ENCODE measurements at regions of chr6 and their contacts with region 1.

Region 1: DNA sequence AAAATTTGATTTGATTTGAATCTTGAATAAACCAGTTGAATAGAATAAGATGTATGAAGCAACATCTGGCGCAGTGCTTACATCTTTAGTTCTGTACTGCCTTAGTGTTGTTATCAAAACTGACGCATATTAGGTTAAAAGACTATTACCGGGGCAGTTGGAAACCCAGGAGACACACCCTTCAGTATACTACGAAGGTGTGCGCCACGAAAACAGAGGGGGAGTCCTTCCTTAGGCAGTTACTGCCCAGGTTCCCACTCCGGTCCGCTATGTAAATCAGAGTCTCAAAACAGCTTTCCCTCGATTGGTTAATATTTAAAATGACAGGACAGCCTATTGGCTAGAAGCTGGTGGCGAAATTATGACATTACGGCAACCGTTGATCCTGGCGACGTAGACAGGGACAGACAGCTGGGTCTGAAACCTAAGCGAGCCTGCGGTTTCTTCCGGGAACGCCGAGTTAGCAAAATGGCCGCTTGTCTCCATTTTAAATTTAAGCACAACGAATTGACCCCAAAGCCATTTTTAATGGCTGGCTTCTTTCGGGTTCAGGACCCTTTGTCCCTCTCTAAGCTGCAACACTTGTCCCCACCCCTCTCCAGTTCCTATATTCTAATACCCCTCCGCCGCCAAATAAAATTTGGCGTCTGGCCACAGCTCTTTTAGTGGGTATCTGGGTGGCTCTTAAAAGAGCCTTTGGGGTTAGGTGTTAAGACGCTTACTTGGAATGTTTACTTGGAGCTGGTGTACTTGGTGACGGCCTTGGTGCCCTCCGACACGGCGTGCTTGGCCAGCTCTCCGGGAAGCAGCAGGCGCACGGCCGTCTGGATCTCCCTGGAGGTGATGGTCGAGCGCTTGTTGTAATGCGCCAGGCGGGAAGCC is 35.8 kb downstream of the HFE start:
- DNase-seq: peak; percentile 80 to 99
- ATAC-seq: peak; percentile 87 to 93 (median 90)
- H3K4me3 ChIP-seq: peak overlapping the region; percentile 65 to 95 (median 83)
- H3K27ac ChIP-seq: peak overlapping the region; percentile 89 to 98 (median 96)
- H3K4me1 ChIP-seq: peaks cover 0 to 26% (median 21%) of the 10 kb centered on the region in 9 donors
- H3K27me3 ChIP-seq: no peaks in the 10 kb centered on the region
- CTCF ChIP-seq: no peak

Region 2: DNA sequence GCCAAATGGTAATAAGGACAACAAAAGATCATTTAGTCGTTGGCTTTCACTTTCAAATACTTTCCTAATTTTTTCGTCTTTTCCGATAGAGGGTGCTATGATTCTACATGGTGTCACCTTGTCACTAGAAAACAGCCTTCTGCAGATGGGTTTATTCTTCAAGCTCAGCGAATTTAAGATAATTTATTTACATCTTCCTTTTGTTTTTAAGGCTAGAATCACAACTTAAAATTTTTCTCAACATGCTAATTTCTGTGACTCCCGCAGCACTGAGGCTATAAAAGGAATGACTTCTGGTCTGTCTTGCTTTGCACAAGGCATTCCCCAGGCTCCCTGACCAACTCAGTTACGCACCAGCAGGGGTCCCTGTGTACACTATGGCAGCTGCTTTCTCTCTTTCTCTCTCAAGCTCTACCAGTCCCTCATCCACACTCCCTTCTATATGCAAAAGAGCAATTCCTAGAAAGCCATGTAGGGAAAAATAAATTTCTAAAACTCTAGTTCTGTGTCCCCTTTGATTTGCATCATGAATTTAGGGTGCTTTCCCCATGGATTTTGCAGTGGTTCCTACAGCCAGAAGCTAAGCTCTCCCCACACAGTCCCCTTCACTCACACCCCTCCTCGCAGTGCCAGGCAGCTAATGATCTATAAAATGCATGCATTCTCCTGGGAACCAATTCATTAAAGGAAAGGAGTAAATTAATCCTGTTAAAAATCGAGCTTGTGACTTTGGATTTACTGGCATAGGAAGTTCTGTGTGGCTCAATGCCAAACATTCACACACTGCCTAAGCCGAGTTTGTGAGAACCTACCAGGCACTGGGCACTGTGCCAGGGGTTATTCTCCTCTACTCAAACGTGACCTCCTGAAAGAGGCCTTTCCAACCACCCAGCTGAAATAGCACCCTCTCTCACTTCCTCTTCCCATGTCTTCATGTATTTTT is 1839.7 kb before region 1 on chr6:
- intact Hi-C with region 1: no loop called
- DNase-seq: peak; percentile 40 to 66
- ATAC-seq: peak; percentile 81 to 94 (median 87)
- H3K4me3 ChIP-seq: peak overlapping the region in 2 of 10 donors; percentile 3 to 18
- H3K27ac ChIP-seq: no peak overlapping the region
- H3K4me1 ChIP-seq: peaks cover 0 to 15% (median 7%) of the 10 kb centered on the region in 9 donors
- H3K27me3 ChIP-seq: peaks cover 0 to 26% (median 11%) of the 10 kb centered on the region in 7 donors
- CTCF ChIP-seq: peak in 8 of 9 donors; percentile 25 to 71 (median 48)

Region 3: DNA sequence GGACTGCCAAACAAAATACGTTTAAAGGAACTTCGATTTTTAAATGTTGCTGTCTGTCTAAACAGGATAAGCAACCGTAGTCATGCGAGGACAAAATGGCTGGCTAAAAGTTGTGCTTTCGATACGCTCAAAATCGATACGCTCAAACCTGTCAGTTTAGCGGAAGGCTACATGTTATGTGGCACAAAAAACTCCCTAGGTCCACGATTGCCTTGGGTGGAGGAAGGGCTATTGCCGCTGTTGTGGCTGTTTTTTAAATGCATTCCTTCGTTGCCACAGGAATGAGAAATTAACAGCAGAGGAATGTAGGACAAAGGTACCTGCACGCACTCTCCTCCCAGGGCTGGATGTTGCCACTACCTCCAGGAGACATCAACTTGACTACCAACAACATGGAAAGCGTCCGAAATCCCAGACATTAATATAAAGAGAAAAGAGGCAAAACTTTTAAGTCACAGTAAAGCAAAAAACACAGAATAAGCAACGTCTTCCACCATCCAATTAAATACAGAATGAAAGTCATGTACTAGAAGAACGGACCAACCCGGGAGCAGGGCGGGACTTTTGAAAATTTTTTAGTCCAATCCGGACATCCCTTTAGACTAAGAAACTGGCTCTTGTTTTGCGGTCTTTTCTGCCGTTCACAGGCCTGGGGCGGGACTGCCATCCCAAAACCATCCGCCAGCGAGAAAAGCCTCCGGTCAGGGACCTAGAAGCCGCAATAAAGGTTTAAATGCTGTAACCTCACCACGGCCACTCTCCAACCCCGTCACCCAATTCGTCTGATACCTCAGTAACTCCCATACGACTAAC is 68.0 kb before region 1 on chr6:
- intact Hi-C with region 1: loop called in 2 of 10 experiments (anchors 2 kb)
- DNase-seq: peak; percentile 66 to 95
- ATAC-seq: peak; percentile 83 to 91 (median 90)
- H3K4me3 ChIP-seq: peak overlapping the region; percentile 53 to 93 (median 76)
- H3K27ac ChIP-seq: peak overlapping the region; percentile 85 to 97 (median 94)
- H3K4me1 ChIP-seq: peaks cover 0 to 32% (median 16%) of the 10 kb centered on the region in 9 donors
- H3K27me3 ChIP-seq: no peaks in the 10 kb centered on the region
- CTCF ChIP-seq: peak in 3 of 9 donors; percentile 21 to 40 (median 23)

Region 4: DNA sequence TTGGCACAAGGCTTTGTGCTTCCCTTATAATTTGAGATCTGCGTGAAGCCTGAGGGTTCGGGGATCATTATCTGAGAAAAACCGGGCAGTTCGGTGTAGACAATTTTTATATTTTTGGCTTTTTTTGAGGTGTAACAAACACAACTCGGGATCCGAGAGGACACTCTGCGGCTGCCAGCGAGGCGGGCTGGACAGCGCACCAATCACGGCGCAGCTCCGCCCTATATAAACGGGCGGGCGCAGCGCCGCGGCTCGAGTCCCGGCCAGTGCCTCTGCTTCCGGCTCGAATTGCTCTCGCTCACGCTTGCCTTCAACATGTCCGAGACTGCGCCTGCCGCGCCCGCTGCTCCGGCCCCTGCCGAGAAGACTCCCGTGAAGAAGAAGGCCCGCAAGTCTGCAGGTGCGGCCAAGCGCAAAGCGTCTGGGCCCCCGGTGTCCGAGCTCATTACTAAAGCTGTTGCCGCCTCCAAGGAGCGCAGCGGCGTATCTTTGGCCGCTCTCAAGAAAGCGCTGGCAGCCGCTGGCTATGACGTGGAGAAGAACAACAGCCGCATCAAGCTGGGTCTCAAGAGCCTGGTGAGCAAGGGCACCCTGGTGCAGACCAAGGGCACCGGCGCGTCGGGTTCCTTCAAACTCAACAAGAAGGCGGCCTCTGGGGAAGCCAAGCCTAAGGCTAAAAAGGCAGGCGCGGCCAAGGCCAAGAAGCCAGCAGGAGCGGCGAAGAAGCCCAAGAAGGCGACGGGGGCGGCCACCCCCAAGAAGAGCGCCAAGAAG is 33.2 kb after region 1 on chr6:
- intact Hi-C with region 1: loop called in 8 of 10 experiments (anchors 1 to 2 kb)
- DNase-seq: peak; percentile 90
- ATAC-seq: peak; percentile 85 to 92 (median 88)
- H3K4me3 ChIP-seq: peak overlapping the region; percentile 52 to 97 (median 79)
- H3K27ac ChIP-seq: peak overlapping the region; percentile 81 to 98 (median 94)
- H3K4me1 ChIP-seq: peaks cover 4 to 31% (median 21%) of the 10 kb centered on the region in 9 donors
- H3K27me3 ChIP-seq: no peaks in the 10 kb centered on the region
- CTCF ChIP-seq: peak in 2 of 9 donors; percentile 8 to 15

Region 5: GRCh38 chr6:26196846-26197648 is 74.0 kb after region 1 on chr6:
- intact Hi-C with region 1: loop called in 4 of 10 experiments (anchors 2 to 10 kb)
- DNase-seq: peak; percentile 51 to 83
- ATAC-seq: peak; percentile 52 to 68 (median 62)
- H3K4me3 ChIP-seq: peak overlapping the region; percentile 37 to 75 (median 65)
- H3K27ac ChIP-seq: peak overlapping the region in 9 of 10 donors; percentile 57 to 90 (median 81)
- H3K4me1 ChIP-seq: peaks cover 0 to 52% (median 28%) of the 10 kb centered on the region in 9 donors
- H3K27me3 ChIP-seq: peaks cover 0 to 40% (median 0%) of the 10 kb centered on the region in 7 donors
- CTCF ChIP-seq: peak in 1 of 9 donors; percentile 0

Region 6: DNA sequence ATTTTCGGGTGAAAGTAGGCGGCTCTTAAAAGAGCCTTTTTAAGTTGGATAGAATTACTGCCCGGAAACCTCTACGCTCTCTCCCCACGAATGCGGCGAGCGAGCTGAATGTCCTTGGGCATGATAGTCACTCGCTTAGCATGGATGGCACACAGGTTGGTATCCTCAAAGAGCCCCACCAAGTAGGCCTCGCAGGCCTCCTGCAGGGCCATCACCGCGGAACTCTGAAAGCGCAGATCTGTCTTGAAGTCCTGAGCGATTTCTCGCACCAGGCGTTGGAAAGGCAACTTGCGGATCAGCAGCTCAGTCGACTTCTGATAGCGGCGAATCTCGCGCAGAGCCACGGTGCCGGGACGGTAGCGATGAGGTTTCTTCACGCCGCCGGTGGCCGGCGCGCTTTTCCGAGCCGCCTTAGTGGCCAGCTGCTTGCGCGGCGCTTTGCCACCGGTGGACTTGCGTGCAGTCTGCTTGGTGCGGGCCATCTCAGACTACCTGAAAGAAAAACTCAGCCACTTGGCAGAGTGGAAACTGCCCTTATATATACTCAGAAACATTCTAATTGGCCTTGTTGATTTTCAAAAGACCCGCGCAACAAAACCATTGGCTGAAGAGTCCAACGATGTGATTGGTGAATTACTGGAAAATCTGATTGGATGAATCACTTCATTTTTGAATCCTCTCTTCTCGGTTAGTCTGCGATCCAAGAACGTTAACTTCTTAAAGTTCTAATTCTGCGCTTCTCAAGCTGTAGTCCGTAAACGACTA is 148.1 kb after region 1 on chr6:
- intact Hi-C with region 1: loop called in 1 of 10 experiments (anchors 10 kb)
- DNase-seq: peak; percentile 29 to 82
- ATAC-seq: peak in 7 of 8 donors; percentile 46 to 66 (median 61)
- H3K4me3 ChIP-seq: peak overlapping the region in 9 of 10 donors; percentile 31 to 64 (median 49)
- H3K27ac ChIP-seq: peak overlapping the region in 6 of 10 donors; percentile 45 to 90 (median 70)
- H3K4me1 ChIP-seq: peaks cover 0 to 41% (median 17%) of the 10 kb centered on the region in 9 donors
- H3K27me3 ChIP-seq: peaks cover 10 to 79% (median 60%) of the 10 kb centered on the region in 7 donors
- CTCF ChIP-seq: no peak

Region 7: DNA sequence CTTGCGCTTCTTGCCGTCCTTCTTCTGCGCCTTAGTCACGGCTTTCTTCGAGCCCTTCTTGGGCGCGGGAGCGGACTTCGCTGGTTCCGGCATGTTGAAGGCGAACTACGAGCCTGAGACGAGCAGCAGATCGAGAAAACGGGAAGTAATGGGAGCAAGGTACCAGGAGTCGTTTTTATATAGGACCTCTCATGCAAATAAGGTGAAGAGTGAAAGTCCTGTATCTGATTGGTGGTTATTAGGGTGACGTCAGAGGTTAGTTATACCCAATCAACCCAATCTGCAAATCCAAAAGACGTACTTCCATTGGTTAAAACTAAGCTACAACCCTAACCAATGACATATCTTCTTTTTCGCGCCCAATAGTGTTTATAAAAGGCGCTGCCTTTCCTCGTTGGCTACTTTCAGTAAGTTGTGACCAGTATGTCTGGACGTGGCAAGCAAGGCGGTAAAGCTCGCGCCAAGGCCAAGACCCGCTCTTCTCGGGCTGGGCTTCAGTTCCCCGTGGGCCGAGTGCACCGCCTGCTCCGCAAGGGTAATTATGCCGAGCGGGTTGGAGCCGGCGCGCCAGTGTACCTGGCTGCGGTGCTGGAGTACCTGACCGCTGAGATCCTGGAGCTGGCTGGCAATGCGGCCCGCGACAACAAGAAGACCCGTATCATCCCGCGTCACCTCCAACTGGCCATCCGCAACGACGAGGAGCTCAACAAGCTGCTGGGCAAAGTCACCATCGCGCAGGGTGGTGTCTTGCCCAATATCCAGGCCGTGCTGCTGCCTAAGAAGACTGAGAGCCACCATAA is 1023.9 kb after region 1 on chr6:
- intact Hi-C with region 1: loop called in 1 of 10 experiments (anchors 10 kb)
- DNase-seq: peak; percentile 62 to 86
- ATAC-seq: peak; percentile 92 to 98 (median 96)
- H3K4me3 ChIP-seq: peak overlapping the region; percentile 45 to 79 (median 66)
- H3K27ac ChIP-seq: peak overlapping the region; percentile 81 to 93 (median 89)
- H3K4me1 ChIP-seq: peaks cover 0 to 33% (median 15%) of the 10 kb centered on the region in 9 donors
- H3K27me3 ChIP-seq: no peaks in the 10 kb centered on the region
- CTCF ChIP-seq: no peak

Measured in heart right ventricle (tissue), 16 donors.